Caco-2 (cell line): ENCODE measurements at regions of chr11 and their contacts with region 1.

Region 1: GRCh38 chr11:43282607-43283440 is 29.0 kb upstream of the API5 start:
- DNase-seq: peak; percentile 46 to 56
- H3K4me3 ChIP-seq: no peak overlapping the region
- H3K4me3 Mint-ChIP-seq: no peak overlapping the region
- H3K27ac Mint-ChIP-seq: no peak overlapping the region
- H3K4me1 ChIP-seq: no peaks in the 10 kb centered on the region
- H3K4me1 Mint-ChIP-seq: no peaks in the 10 kb centered on the region
- H3K27me3 ChIP-seq: no peaks in the 10 kb centered on the region
- H3K27me3 Mint-ChIP-seq: peaks cover 2% of the 10 kb centered on the region
- CTCF ChIP-seq: peak; percentile 86 to 96

Region 2: DNA sequence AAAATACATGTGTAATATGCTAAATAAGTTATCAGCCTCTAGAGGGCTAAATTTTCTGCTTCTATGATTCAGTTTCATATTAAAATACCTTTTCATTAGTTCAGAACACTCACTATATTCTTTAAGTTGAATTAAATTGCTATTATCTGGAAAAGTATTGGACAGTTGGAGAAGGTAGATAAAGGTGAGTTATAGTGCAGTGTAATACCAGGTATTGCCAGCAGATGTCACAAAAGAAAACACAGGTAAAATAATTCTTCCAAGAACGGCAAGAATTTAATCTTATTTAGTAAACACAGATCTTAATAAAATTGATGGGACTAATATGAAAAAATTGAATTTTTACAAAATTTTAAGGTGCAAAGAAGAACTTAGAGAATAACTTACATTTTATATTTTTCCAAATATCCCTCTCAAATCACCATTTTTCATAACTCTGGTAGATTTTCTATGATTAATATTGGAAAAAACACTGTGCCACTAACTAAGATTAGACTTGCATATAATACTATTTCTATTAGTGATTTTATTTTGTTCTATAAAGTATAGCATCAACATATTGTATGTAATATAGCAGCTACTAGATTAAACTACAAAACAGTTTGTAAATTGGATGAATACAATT is 1821.7 kb before region 1 on chr11:
- CTCF ChIA-PET with region 1: no interaction called
- POLR2A ChIA-PET with region 1: no interaction called
- intact Hi-C with region 1: loop called (anchors 1 kb)
- DNase-seq: peak in 1 of 2 experiments; percentile 28
- H3K4me3 ChIP-seq: no peak overlapping the region
- H3K4me3 Mint-ChIP-seq: no peak overlapping the region
- H3K27ac Mint-ChIP-seq: no peak overlapping the region
- H3K4me1 ChIP-seq: no peaks in the 10 kb centered on the region
- H3K4me1 Mint-ChIP-seq: no peaks in the 10 kb centered on the region
- H3K27me3 ChIP-seq: no peaks in the 10 kb centered on the region
- H3K27me3 Mint-ChIP-seq: peaks cover 5% of the 10 kb centered on the region
- CTCF ChIP-seq: peak; percentile 62 to 81

Region 3: GRCh38 chr11:42770444-42771065 is 512.3 kb before region 1 on chr11:
- CTCF ChIA-PET with region 1: interaction called, 10 read pairs
- POLR2A ChIA-PET with region 1: no interaction called
- intact Hi-C with region 1: loop called (anchors 1 kb)
- DNase-seq: peak in 1 of 2 experiments; percentile 31
- H3K4me3 ChIP-seq: no peak overlapping the region
- H3K4me3 Mint-ChIP-seq: no peak overlapping the region
- H3K27ac Mint-ChIP-seq: no peak overlapping the region
- H3K4me1 ChIP-seq: no peaks in the 10 kb centered on the region
- H3K4me1 Mint-ChIP-seq: no peaks in the 10 kb centered on the region
- H3K27me3 ChIP-seq: no peaks in the 10 kb centered on the region
- H3K27me3 Mint-ChIP-seq: peaks cover 6% of the 10 kb centered on the region
- CTCF ChIP-seq: peak; percentile 73 to 80

Region 4: GRCh38 chr11:42951240-42951639 is 331.6 kb before region 1 on chr11:
- CTCF ChIA-PET with region 1: no interaction called
- POLR2A ChIA-PET with region 1: no interaction called
- intact Hi-C with region 1: no loop called
- DNase-seq: no peak
- H3K4me3 ChIP-seq: no peak overlapping the region
- H3K4me3 Mint-ChIP-seq: no peak overlapping the region
- H3K27ac Mint-ChIP-seq: no peak overlapping the region
- H3K4me1 ChIP-seq: no peaks in the 10 kb centered on the region
- H3K4me1 Mint-ChIP-seq: no peaks in the 10 kb centered on the region
- H3K27me3 ChIP-seq: no peaks in the 10 kb centered on the region
- H3K27me3 Mint-ChIP-seq: no peaks in the 10 kb centered on the region
- CTCF ChIP-seq: no peak

Region 5: DNA sequence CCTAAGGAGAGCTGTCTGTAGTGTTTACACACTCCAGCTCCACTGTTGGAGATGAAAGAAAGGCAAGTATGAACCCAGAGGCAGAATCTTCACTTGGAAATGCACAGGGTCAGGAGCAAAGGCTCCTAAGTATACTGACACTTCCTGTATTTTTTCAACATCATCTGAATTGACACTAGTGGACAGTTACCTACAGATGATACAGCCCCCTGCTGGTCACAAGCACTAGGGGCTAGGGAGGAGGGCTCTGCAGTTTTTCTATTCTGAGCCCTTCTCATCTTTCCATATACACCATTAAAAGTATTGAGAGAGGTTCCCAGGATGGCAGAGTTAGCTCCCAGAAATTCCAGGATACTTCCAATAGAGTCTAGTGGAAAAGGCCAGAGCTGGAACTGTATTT is 261.4 kb before region 1 on chr11:
- CTCF ChIA-PET with region 1: interaction called, 6 read pairs
- POLR2A ChIA-PET with region 1: no interaction called
- intact Hi-C with region 1: loop called (anchors 1 kb)
- DNase-seq: peak; percentile 39 to 42
- H3K4me3 ChIP-seq: no peak overlapping the region
- H3K4me3 Mint-ChIP-seq: no peak overlapping the region
- H3K27ac Mint-ChIP-seq: no peak overlapping the region
- H3K4me1 ChIP-seq: no peaks in the 10 kb centered on the region
- H3K4me1 Mint-ChIP-seq: no peaks in the 10 kb centered on the region
- H3K27me3 ChIP-seq: no peaks in the 10 kb centered on the region
- H3K27me3 Mint-ChIP-seq: no peaks in the 10 kb centered on the region
- CTCF ChIP-seq: peak; percentile 59 to 62

Region 6: GRCh38 chr11:43311791-43312607 is 29.2 kb after region 1 on chr11 and contains the start of gene API5:
- CTCF ChIA-PET with region 1: interaction called, 15 read pairs
- POLR2A ChIA-PET with region 1: no interaction called
- intact Hi-C with region 1: no loop called
- DNase-seq: peak; percentile 95 to 96
- H3K4me3 ChIP-seq: peak within 1 kb of the TSS; percentile 79
- H3K4me3 Mint-ChIP-seq: peak within 1 kb of the TSS; percentile 99
- H3K27ac Mint-ChIP-seq: peak within 1 kb of the TSS; percentile 97
- H3K4me1 ChIP-seq: peaks cover 6% of the 10 kb centered on the region; the same call in 1 of the 2 replicates
- H3K4me1 Mint-ChIP-seq: peaks cover 7% of the 10 kb centered on the region
- H3K27me3 ChIP-seq: no peaks in the 10 kb centered on the region
- H3K27me3 Mint-ChIP-seq: no peaks in the 10 kb centered on the region
- CTCF ChIP-seq: peak; percentile 67 to 95
- total RNA-seq, gene API5: 129 and 140 TPM in 2 replicates